Aorta (tissue), 5 donors: ENCODE measurements at regions of chr2 and their contacts with region 1.

Region 1: DNA sequence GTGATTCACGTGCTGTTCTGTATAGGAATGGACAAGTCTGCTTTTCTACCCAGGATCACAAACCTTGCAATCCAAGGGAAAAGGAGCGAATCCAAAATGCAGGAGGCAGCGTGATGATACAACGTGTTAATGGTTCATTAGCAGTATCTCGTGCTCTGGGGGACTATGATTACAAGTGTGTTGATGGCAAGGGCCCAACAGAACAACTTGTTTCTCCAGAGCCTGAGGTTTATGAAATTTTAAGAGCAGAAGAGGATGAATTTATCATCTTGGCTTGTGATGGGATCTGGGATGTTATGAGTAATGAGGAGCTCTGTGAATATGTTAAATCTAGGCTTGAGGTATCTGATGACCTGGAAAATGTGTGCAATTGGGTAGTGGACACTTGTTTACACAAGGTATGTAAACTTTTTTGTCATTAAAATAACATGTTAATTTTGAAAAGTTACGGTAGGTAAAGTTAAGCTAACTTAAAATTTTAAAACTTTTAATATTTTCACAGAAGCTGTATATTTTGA is 33.0 kb downstream of the PPM1B start:
- DNase-seq: no peak
- ATAC-seq: no peak
- H3K4me3 ChIP-seq: no peak overlapping the region
- H3K27ac ChIP-seq: no peak overlapping the region
- H3K4me1 ChIP-seq: peaks cover 3 to 4% of the 10 kb centered on the region in 2 donors
- H3K27me3 ChIP-seq: no peaks in the 10 kb centered on the region

Region 2: DNA sequence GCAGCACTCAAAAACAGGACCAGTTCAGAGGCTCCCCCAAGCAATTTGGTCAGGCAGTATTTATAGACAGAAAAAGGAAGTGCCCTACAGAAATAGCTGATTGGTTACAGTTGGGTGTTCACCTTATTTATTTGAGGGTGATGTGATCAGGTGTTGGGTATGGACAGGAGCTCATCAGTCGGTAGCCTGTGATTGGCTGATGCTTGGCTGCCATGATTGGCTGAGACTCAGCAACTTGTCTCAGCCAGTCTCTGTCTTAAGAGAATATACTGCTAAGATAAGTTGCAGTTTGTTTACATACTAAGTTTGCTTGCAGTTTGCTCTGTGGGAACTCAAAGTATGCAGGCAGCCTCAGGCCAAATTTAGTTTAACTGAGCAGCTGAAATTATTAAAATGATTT is 353.5 kb before region 1 on chr2:
- intact Hi-C with region 1: no loop called
- DNase-seq: no peak
- ATAC-seq: no peak
- H3K4me3 ChIP-seq: no peak overlapping the region
- H3K27ac ChIP-seq: no peak overlapping the region
- H3K4me1 ChIP-seq: no peaks in the 10 kb centered on the region
- H3K27me3 ChIP-seq: no peaks in the 10 kb centered on the region

Region 3: GRCh38 chr2:44178950-44179349 is 22.8 kb before region 1 on chr2:
- intact Hi-C with region 1: loop called in 1 of 2 experiments (anchors 1 kb)
- DNase-seq: no peak
- ATAC-seq: no peak
- H3K4me3 ChIP-seq: no peak overlapping the region
- H3K27ac ChIP-seq: no peak overlapping the region
- H3K4me1 ChIP-seq: peaks cover 6 to 12% of the 10 kb centered on the region in 2 donors
- H3K27me3 ChIP-seq: no peaks in the 10 kb centered on the region